Endothelial cell of umbilical vein (primary cell): ENCODE measurements at regions of chr7 and their contacts with region 1.

Region 1: DNA sequence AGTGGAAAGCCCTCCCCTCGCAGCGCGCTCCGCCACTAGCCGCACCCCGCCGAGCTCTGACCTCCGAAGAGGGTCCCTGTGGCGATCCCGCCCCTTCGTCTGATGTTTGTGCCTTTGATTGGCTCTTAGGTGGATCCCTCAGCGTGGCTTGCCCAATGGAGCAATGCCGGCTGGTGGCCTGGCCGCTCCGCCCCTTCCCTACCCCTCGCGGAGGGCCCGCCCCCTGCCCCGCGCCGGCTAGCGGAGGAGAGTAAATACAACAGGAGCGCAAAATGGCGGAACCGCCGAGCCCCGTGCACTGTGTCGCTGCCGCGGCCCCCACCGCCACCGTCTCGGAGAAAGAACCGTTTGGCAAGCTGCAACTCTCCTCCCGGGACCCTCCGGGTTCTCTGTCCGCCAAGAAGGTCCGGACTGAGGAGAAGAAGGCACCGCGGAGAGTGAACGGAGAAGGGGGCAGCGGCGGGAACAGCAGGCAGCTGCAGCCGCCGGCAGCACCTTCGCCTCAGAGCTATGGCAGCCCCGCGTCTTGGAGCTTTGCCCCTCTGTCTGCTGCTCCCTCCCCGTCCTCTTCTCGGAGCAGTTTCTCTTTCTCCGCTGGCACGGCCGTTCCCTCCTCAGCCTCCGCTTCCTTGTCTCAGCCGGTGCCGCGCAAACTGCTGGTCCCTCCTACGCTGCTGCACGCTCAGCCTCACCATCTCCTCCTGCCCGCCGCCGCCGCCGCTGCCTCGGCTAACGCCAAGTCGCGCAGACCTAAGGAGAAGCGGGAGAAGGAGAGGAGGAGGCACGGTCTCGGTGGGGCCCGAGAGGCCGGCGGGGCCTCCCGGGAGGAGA is at the start of gene RSBN1L:
- DNase-seq: peak; percentile 99
- H3K4me3 ChIP-seq: peak within 1 kb of the TSS; percentile 90 to 97 (median 91)
- H3K27ac ChIP-seq: peak within 1 kb of the TSS; percentile 62
- H3K4me1 ChIP-seq: peaks cover 23% of the 10 kb centered on the region
- H3K27me3 ChIP-seq: no peaks in the 10 kb centered on the region
- CTCF ChIP-seq: peak; percentile 11 to 34
- POLR2A ChIP-seq: peak; percentile 88
- total RNA-seq, gene RSBN1L: 13.1 and 13.3 TPM in 2 replicates

Region 2: GRCh38 chr7:77734659-77735421 is 38.4 kb after region 1 on chr7:
- CTCF ChIA-PET with region 1: interaction called, 7 read pairs
- POLR2A ChIA-PET with region 1: no interaction called
- dilution Hi-C with region 1: no loop called
- intact Hi-C with region 1: loop called (anchors 2 kb)
- DNase-seq: peak; percentile 70
- H3K4me3 ChIP-seq: peak overlapping the region in 1 of 3 experiments; percentile 48
- H3K27ac ChIP-seq: peak overlapping the region; percentile 47
- H3K4me1 ChIP-seq: peaks cover 24% of the 10 kb centered on the region
- H3K27me3 ChIP-seq: no peaks in the 10 kb centered on the region
- CTCF ChIP-seq: no peak
- POLR2A ChIP-seq: no peak

Region 3: DNA sequence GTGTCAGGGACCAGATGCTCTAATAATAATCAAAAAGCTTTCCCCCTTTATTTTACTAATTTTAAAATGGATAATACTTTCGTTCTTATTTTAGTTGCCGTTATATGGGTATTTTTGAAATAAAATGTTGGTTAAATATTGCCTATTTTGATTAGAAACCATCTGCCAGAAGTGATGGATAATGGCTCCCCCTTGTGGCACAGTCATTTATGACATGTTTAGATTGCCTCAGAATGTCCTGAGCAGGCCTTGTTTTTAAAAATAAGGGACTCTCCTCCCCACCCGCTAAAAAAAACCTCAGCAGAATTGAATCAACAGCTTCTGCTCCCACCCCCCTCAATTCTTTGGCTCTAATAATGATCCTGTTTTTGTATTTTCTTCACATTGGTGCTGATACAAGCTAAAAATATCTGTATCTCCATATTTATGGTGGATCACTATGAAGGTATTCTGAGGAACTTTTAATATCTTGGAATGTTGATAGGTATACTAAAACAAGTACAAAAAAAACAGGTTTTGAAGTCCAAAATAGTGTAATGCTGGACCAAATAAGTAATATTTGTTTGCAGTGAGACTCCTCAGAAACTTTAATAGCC is 63.0 kb after region 1 on chr7:
- CTCF ChIA-PET with region 1: interaction called, 5 read pairs
- POLR2A ChIA-PET with region 1: no interaction called
- dilution Hi-C with region 1: no loop called
- intact Hi-C with region 1: loop called (anchors 2 kb)
- DNase-seq: peak; percentile 82
- H3K4me3 ChIP-seq: no peak overlapping the region
- H3K27ac ChIP-seq: no peak overlapping the region
- H3K4me1 ChIP-seq: no peaks in the 10 kb centered on the region
- H3K27me3 ChIP-seq: no peaks in the 10 kb centered on the region
- CTCF ChIP-seq: peak; percentile 55 to 66
- POLR2A ChIP-seq: no peak

Region 4: GRCh38 chr7:77771901-77772300 is 75.5 kb after region 1 on chr7:
- CTCF ChIA-PET with region 1: no interaction called
- POLR2A ChIA-PET with region 1: no interaction called
- dilution Hi-C with region 1: no loop called
- intact Hi-C with region 1: no loop called
- DNase-seq: no peak
- H3K4me3 ChIP-seq: no peak overlapping the region
- H3K27ac ChIP-seq: no peak overlapping the region
- H3K4me1 ChIP-seq: no peaks in the 10 kb centered on the region
- H3K27me3 ChIP-seq: no peaks in the 10 kb centered on the region
- CTCF ChIP-seq: no peak
- POLR2A ChIP-seq: no peak

Region 5: DNA sequence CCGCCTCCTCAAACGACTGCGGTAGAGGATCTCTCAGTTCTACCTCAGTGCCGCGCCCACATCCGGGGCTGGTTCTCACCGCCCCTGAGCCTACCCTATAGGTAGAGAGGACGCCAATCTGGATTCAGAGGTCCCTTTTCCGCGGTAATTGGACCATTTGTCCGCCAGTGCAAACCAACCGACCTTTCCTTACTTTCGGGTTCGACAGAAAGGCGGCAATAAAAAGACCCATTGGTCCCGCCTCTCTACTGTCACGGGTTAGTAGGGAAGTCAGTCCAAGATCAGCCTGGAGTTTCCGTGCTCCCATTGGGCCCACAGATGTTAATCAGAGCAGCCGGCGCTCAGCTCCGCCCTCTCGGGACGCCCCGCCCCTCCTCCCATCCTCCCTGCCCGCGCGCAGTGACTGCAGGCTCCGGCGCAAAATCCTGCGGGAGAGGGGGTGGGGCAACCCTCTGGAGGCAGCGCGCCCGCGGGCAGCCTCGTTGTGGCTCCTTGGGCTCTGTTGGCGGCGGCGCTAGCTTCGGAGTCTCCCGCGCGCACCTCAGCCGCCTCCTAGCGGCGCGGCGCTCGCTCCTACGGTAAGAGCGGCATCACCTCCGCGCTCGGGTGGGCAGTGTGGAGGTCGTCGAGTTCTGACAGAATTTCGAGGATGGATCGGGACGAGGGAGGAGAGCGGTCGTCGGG is 102.1 kb after region 1 on chr7 and contains the starts of genes PHTF2 and TMEM60:
- CTCF ChIA-PET with region 1: no interaction called
- POLR2A ChIA-PET with region 1: interaction called, 5 read pairs
- dilution Hi-C with region 1: no loop called
- intact Hi-C with region 1: loop called (anchors 5 kb)
- DNase-seq: peak; percentile 100
- H3K4me3 ChIP-seq: peak within 1 kb of the TSS; percentile 70 to 94 (median 90)
- H3K27ac ChIP-seq: peak within 1 kb of the TSS; percentile 66
- H3K4me1 ChIP-seq: peaks cover 31% of the 10 kb centered on the region
- H3K27me3 ChIP-seq: no peaks in the 10 kb centered on the region
- CTCF ChIP-seq: peak; percentile 41 to 73
- POLR2A ChIP-seq: peak; percentile 15
- total RNA-seq, gene PHTF2: 21.4 TPM in 2 replicates
- total RNA-seq, gene TMEM60: 15.0 and 15.8 TPM in 2 replicates

Region 6: DNA sequence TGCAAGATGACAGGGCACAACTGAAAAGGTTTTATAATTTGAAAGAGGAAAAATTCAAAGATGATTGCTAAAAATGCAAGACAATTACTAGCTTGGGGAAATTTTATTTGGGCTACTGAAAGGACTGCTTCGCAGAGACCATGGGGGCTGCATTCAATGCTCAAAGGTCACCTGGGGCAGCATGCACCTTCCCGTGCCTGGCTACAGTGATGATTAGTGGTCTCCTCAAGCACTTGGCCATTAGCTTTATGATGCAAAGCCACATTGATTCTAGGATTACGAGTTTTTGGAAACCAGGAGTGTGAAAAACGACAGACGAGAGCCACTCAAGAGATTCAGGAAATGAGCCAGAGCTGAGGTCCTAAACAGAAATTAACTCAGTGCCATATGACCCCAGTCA is 866.8 kb after region 1 on chr7:
- CTCF ChIA-PET with region 1: no interaction called
- POLR2A ChIA-PET with region 1: no interaction called
- dilution Hi-C with region 1: no loop called
- intact Hi-C with region 1: no loop called
- DNase-seq: no peak
- H3K4me3 ChIP-seq: no peak overlapping the region
- H3K27ac ChIP-seq: no peak overlapping the region
- H3K4me1 ChIP-seq: no peaks in the 10 kb centered on the region
- H3K27me3 ChIP-seq: no peaks in the 10 kb centered on the region
- CTCF ChIP-seq: no peak
- POLR2A ChIP-seq: no peak